ENCODE measurements at regions of chr17 and their contacts with region 1.

Region 1: GRCh38 chr17:49556223-49556971 is 19.3 kb upstream of the NXPH3 start:
- DNase-seq: peak; percentile 63
- H3K4me3 Mint-ChIP-seq: no peak overlapping the region
- H3K27ac Mint-ChIP-seq: no peak overlapping the region
- H3K4me1 Mint-ChIP-seq: peaks cover 20% of the 10 kb centered on the region
- H3K27me3 Mint-ChIP-seq: peaks cover 11% of the 10 kb centered on the region
- CTCF ChIP-seq: peak; percentile 98

Region 2: DNA sequence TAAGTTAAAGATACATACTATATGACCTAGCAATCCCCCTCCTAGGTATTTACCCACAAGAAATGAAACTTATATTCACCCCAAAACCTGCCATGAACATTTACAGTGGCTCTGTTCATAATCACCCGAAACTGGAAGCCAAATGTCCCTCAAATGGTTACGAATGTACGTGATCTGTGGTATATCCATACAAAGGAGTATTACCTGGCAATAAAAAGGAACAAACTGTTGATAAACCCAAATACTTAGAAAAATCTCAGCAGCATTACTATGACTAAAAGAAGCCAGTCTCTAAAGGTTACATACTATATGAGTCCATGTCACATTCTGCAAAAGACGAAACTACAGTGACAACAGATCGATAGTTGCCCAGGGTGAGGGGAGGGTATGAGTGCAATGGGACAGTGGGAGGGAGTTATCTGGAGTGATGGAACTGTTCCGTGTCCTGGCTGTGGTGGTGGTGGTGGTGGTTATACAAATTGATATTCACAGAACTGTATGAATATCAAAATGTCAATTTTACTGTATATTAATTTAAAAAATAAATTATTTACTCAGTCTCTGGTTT is 203.7 kb before region 1 on chr17:
- CTCF ChIA-PET with region 1: no interaction called
- POLR2A ChIA-PET with region 1: no interaction called
- intact Hi-C with region 1: no loop called
- DNase-seq: no peak
- H3K4me3 Mint-ChIP-seq: no peak overlapping the region
- H3K27ac Mint-ChIP-seq: no peak overlapping the region
- H3K4me1 Mint-ChIP-seq: peaks cover 9% of the 10 kb centered on the region
- H3K27me3 Mint-ChIP-seq: no peaks in the 10 kb centered on the region
- CTCF ChIP-seq: no peak

Region 3: DNA sequence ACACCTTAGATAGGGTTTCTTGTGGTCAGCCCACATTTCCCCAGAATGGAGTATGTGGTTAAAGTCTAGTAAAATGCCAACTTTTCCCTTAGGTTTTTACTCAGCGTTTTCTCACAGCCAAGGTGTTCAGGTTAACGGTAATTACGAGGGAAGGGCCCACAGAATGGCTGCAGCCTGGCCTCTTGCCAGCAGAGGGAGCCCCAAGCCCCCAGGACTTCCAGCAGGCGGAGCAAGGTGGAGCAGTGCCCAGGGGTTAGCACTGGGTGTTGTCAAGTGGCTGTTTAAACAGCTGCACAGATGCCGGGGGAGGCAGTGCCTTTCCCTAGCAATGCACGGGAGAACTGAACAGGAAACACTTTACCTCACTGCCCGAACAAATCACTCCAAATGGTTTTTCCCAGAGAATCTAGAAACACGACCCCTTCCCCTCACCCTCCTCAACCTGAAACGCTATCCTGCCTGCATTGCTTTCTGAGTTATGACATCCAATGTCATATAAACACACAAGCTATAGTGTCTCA is 148.4 kb before region 1 on chr17:
- CTCF ChIA-PET with region 1: interaction called, 60 read pairs
- POLR2A ChIA-PET with region 1: no interaction called
- intact Hi-C with region 1: loop called (anchors 1 kb)
- DNase-seq: peak; percentile 55
- H3K4me3 Mint-ChIP-seq: no peak overlapping the region
- H3K27ac Mint-ChIP-seq: peak overlapping the region; percentile 66
- H3K4me1 Mint-ChIP-seq: peaks cover 11% of the 10 kb centered on the region
- H3K27me3 Mint-ChIP-seq: no peaks in the 10 kb centered on the region
- CTCF ChIP-seq: peak; percentile 80

Region 4: DNA sequence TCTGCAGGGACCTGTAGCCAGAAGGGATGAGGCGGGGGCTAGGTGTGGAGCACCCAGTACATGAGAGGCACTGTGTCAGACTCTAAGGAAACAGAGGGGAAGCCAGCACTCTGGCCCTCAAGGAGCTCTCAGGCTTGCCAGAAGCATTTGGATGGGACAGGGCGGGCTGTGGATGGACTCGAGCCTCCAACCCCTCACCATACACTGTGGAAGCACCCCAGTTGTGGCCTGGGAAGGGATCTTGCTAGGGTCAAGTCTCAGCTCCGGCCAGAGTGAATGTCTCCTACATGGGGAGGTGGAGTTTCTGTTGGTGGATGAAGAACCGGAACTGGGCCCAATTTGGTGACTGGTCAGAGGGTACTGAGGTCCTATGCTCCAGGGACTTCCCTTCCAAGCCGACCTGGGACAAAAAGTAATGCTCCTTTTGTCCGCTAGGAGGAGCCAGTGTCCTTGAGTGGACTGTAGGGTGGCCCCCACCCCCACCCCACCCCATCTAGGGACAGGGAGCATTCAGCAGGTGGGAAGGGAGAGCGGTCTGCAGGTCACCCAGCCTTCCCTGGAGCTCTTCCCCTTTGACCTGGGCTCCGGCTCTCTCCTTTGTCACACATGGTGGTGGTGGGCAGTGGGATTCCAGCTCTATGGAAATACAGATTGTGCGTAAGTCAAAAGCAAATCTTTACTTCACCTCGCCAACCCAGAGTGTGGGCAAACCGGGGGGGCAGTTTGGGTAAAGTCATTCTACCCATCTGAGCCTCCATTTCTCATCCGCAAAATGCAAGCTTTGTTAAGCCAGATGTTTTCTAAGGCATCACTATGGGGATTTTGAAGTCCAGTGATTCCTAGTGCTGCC is 121.4 kb before region 1 on chr17:
- CTCF ChIA-PET with region 1: interaction called, 165 read pairs
- POLR2A ChIA-PET with region 1: interaction called, 4 read pairs
- intact Hi-C with region 1: no loop called
- DNase-seq: peak; percentile 70
- H3K4me3 Mint-ChIP-seq: no peak overlapping the region
- H3K27ac Mint-ChIP-seq: no peak overlapping the region
- H3K4me1 Mint-ChIP-seq: no peaks in the 10 kb centered on the region
- H3K27me3 Mint-ChIP-seq: peaks cover 52% of the 10 kb centered on the region
- CTCF ChIP-seq: peak; percentile 93

Region 5: DNA sequence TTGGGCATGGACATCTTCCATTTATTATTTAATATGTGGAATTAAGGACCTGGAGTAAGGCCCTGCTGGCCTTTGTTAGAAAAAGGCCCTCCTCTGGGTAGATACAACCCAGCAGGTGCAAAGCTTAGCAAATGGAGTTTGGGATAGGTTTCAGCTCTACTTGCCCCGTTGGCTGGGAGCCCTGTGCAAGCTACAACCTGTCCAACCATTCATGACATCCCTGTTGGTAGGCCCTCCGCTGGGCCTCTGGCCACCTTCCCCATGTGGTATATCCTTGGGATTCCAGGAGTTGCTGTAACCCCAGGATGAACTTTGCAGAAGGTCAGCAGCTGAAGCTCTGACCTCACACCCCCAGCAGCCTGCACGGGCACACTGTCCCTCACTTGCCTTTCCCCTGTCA is 54.9 kb before region 1 on chr17:
- CTCF ChIA-PET with region 1: interaction called, 58 read pairs
- POLR2A ChIA-PET with region 1: interaction called, 8 read pairs
- intact Hi-C with region 1: loop called (anchors 2 kb)
- DNase-seq: peak; percentile 87
- H3K4me3 Mint-ChIP-seq: no peak overlapping the region
- H3K27ac Mint-ChIP-seq: no peak overlapping the region
- H3K4me1 Mint-ChIP-seq: peaks cover 18% of the 10 kb centered on the region
- H3K27me3 Mint-ChIP-seq: peaks cover 61% of the 10 kb centered on the region
- CTCF ChIP-seq: no peak

Region 6: GRCh38 chr17:49515196-49515770 is 41.1 kb before region 1 on chr17:
- CTCF ChIA-PET with region 1: interaction called, 34 read pairs
- POLR2A ChIA-PET with region 1: no interaction called
- intact Hi-C with region 1: no loop called
- DNase-seq: peak; percentile 91
- H3K4me3 Mint-ChIP-seq: no peak overlapping the region
- H3K27ac Mint-ChIP-seq: peak overlapping the region; percentile 97
- H3K4me1 Mint-ChIP-seq: peaks cover 18% of the 10 kb centered on the region
- H3K27me3 Mint-ChIP-seq: no peaks in the 10 kb centered on the region
- CTCF ChIP-seq: no peak

Region 7: GRCh38 chr17:49694847-49695683 is 138.7 kb after region 1 on chr17:
- CTCF ChIA-PET with region 1: interaction called, 42 read pairs
- POLR2A ChIA-PET with region 1: interaction called, 4 read pairs
- intact Hi-C with region 1: no loop called
- DNase-seq: peak; percentile 30
- H3K4me3 Mint-ChIP-seq: no peak overlapping the region
- H3K27ac Mint-ChIP-seq: no peak overlapping the region
- H3K4me1 Mint-ChIP-seq: no peaks in the 10 kb centered on the region
- H3K27me3 Mint-ChIP-seq: no peaks in the 10 kb centered on the region
- CTCF ChIP-seq: peak; percentile 92

Region 8: DNA sequence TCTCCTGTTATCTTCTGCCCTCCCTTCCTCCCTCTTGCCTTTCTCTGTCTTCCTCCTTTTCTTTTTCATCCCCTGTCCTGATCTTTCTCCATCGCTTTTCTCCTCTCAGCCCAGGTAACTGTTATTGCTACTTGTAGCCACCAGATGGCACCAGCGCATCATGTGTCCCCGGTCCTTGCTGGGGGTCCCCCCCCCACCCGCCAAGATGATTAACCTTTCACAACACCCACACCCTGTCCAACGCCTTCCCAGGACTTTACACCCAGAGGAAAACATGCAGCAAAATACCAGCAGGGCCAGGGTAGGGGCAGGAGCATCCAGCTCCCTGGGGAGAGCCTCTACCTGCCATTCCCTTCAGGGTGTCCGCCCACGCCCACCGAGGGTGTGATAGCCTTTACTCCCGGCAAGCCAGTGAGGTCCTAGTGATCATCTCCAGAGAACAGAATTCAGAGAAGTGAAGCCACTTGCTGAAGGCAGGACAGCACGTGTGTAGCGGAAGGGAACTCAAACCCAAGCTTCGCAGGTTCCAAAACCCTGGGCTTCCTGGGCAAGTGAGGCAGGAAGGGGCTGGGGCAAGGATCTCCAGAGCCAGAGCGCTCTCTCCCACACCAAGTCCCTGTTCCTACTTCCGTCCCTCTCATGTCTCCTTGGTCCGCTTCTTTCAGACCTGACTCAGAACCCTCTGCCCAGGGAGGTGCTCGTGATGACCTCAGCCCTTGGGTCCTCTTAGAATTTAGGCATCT is 304.9 kb after region 1 on chr17:
- CTCF ChIA-PET with region 1: interaction called, 4 read pairs
- POLR2A ChIA-PET with region 1: no interaction called
- intact Hi-C with region 1: loop called (anchors 1 kb)
- DNase-seq: peak; percentile 65
- H3K4me3 Mint-ChIP-seq: no peak overlapping the region
- H3K27ac Mint-ChIP-seq: no peak overlapping the region
- H3K4me1 Mint-ChIP-seq: no peaks in the 10 kb centered on the region
- H3K27me3 Mint-ChIP-seq: no peaks in the 10 kb centered on the region
- CTCF ChIP-seq: peak; percentile 89

Measured in MCF 10A (cell line).